Activated naive CD4-positive, alpha-beta T cell treated with anti-CD3 and anti-CD28 coated beads, Interleukin-2, amount 10 ng/mL, durations not matched to agents 7 days and 5 days (primary cell): ENCODE measurements at regions of chr12 and their contacts with region 1.

Region 1: GRCh38 chr12:98743347-98743953 is 98.4 kb downstream of the APAF1 start:
- DNase-seq: peak; percentile 55
- H3K4me3 Mint-ChIP-seq: no peak overlapping the region
- H3K27ac Mint-ChIP-seq: no peak overlapping the region
- H3K4me1 Mint-ChIP-seq: peaks cover 14% of the 10 kb centered on the region
- H3K27me3 Mint-ChIP-seq: peaks cover 54% of the 10 kb centered on the region

Region 2: DNA sequence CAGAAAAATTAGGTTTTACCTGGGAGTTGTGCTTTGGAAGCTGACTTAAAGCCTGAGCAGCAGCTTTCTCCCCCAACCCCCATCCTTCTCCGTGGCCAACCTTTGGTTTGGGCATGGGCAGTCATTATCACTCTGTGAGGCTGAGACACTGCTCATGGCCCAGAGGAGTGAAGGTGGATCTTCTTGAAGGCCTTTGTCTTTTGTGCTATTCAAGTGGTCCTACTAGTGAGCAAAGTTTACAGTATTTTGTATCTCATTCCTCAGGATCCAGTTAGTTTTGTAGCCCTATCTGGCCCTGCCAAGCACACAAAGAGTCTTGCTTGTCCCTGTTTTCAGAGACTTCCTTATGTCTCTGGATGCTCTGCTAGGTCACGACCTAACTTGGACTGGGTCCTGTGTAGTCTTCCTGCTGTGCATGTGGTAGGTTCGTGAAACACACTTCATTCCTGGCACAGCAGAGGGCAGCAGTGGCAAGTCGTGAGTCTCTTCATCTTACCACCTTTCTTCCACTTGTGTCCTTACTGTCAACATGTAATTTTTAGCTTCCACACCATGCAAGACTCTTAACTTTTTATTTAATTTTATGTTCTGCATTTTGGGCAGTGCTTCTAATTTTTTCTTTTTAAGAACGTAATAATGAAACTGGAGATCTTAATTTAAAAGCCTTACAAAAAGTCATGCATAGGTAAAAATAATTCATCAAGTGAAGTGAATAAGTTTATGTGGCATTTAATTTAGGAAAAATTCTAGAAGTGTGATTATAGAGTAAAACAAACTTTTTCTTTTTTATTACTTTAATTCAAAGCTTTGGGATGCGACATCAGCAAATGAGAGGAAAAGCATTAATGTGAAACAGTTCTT is 44.6 kb before region 1 on chr12:
- CTCF ChIA-PET with region 1: interaction called, 11 read pairs
- DNase-seq: peak; percentile 61
- H3K4me3 Mint-ChIP-seq: no peak overlapping the region
- H3K27ac Mint-ChIP-seq: no peak overlapping the region
- H3K4me1 Mint-ChIP-seq: peaks cover 7% of the 10 kb centered on the region
- H3K27me3 Mint-ChIP-seq: no peaks in the 10 kb centered on the region

Region 3: GRCh38 chr12:98754095-98754494 is 10.6 kb after region 1 on chr12:
- CTCF ChIA-PET with region 1: interaction called, 22 read pairs
- DNase-seq: no peak
- H3K4me3 Mint-ChIP-seq: no peak overlapping the region
- H3K27ac Mint-ChIP-seq: no peak overlapping the region
- H3K4me1 Mint-ChIP-seq: peaks cover 3% of the 10 kb centered on the region
- H3K27me3 Mint-ChIP-seq: peaks cover 15% of the 10 kb centered on the region